Right ventricle myocardium inferior (tissue), 1 donor: ENCODE measurements at regions of chr14 and their contacts with region 1.

Region 1: GRCh38 chr14:37150414-37150813 is 22.0 kb downstream of the SLC25A21 start:
- DNase-seq: no peak
- ATAC-seq: no peak

Region 2: GRCh38 chr14:36553656-36554260 is 596.7 kb before region 1 on chr14:
- intact Hi-C with region 1: loop called (anchors 10 kb)
- DNase-seq: no peak
- ATAC-seq: no peak

Region 3: GRCh38 chr14:36647824-36648753 is 502.3 kb before region 1 on chr14:
- intact Hi-C with region 1: loop called (anchors 5 kb)
- DNase-seq: no peak
- ATAC-seq: peak; percentile 75